Activated CD4-positive, alpha-beta T cell treated with anti-CD3 and anti-CD28 coated beads, Interleukin-2, amount 10 ng/mL, durations not matched to agents 24 days and 14 days (primary cell): ENCODE measurements at regions of chr5 and their contacts with region 1.

Region 1: GRCh38 chr5:36875790-36876388 is 680 bp upstream of the NIPBL start:
- DNase-seq: peak; percentile 93
- H3K4me3 Mint-ChIP-seq: peak overlapping the region; percentile 88
- H3K27ac Mint-ChIP-seq: peak overlapping the region; percentile 91
- H3K4me1 Mint-ChIP-seq: peaks cover 28% of the 10 kb centered on the region
- H3K27me3 Mint-ChIP-seq: no peaks in the 10 kb centered on the region

Region 2: GRCh38 chr5:35617435-35618303 is 1258.2 kb before region 1 on chr5 and contains the start of gene SPEF2:
- intact Hi-C with region 1: loop called (anchors 10 kb)
- DNase-seq: peak; percentile 93
- H3K4me3 Mint-ChIP-seq: peak within 1 kb of the TSS; percentile 87
- H3K27ac Mint-ChIP-seq: peak within 1 kb of the TSS; percentile 89
- H3K4me1 Mint-ChIP-seq: peaks cover 23% of the 10 kb centered on the region
- H3K27me3 Mint-ChIP-seq: no peaks in the 10 kb centered on the region
- total RNA-seq, gene SPEF2: 5.5 and 5.8 TPM in 2 replicates

Region 3: DNA sequence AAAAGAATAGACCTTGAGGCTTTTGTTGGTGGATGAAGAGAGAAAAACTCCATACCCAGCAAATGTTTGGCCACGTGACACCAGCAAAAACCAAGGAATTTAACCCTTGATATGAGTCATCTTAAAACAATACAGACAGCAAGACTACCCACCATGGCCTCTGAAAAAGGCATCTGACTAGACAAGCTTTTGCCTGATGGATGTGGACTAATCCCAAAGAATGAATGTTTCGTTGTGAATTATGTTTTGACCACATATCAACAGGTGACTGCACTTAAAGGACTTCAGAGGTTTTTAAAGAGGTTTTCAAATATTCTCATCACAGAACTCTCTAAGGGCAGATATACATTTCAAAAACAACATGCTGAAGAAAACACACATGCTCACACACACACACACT is 302.4 kb before region 1 on chr5:
- intact Hi-C with region 1: no loop called
- DNase-seq: no peak
- H3K4me3 Mint-ChIP-seq: no peak overlapping the region
- H3K27ac Mint-ChIP-seq: no peak overlapping the region
- H3K4me1 Mint-ChIP-seq: no peaks in the 10 kb centered on the region
- H3K27me3 Mint-ChIP-seq: peaks cover 2% of the 10 kb centered on the region

Region 4: GRCh38 chr5:36739751-36740221 is 136.1 kb before region 1 on chr5:
- intact Hi-C with region 1: loop called (anchors 1 kb)
- DNase-seq: peak; percentile 91
- H3K4me3 Mint-ChIP-seq: no peak overlapping the region
- H3K27ac Mint-ChIP-seq: no peak overlapping the region
- H3K4me1 Mint-ChIP-seq: peaks cover 11% of the 10 kb centered on the region
- H3K27me3 Mint-ChIP-seq: peaks cover 29% of the 10 kb centered on the region

Region 5: GRCh38 chr5:36928947-36929346 is 53.1 kb after region 1 on chr5:
- intact Hi-C with region 1: loop called (anchors 5 kb)
- DNase-seq: no peak
- H3K4me3 Mint-ChIP-seq: no peak overlapping the region
- H3K27ac Mint-ChIP-seq: no peak overlapping the region
- H3K4me1 Mint-ChIP-seq: peaks cover 11% of the 10 kb centered on the region
- H3K27me3 Mint-ChIP-seq: no peaks in the 10 kb centered on the region

Region 6: DNA sequence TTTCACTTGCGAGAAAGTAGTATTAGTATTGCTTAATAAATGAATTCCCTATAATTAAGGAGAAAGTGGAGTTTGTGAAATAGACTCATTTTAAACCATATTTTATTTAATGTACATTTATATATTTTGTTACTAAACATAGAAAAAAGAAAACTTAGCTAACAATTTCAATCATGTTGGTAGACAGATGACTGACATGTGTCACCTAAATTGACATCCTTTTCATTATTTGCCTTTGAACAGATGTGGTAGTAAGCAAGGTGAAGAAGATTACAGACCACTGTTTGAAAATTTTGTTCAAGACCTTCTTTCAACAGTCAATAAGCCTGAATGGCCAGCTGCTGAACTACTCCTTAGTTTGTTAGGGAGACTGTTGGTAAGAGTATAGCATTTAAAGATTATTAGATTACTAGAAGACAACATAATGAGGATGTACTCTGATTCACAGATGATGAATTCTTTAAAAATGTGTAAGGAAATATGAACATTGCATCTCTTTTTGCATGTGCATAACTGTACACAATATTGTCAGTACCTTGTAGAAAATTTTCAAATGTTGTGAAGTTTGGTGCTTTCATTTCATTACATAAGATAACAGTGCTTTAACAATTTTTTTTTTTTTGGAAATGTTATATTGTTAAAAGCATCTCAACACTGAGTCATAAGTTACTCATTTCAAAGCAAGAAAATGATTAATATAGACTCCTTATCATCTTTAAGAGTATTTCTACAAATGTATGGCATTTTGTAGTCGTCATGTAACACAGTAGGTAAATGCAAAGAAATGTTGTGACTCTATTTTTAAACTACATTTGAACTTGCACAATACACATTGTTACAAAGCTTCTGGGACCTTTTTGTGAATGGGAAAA is 140.1 kb after region 1 on chr5:
- intact Hi-C with region 1: no loop called
- DNase-seq: no peak
- H3K4me3 Mint-ChIP-seq: no peak overlapping the region
- H3K27ac Mint-ChIP-seq: no peak overlapping the region
- H3K4me1 Mint-ChIP-seq: no peaks in the 10 kb centered on the region
- H3K27me3 Mint-ChIP-seq: no peaks in the 10 kb centered on the region

Region 7: GRCh38 chr5:37111426-37112382 is 235.8 kb after region 1 on chr5:
- intact Hi-C with region 1: loop called (anchors 5 kb)
- DNase-seq: peak; percentile 87
- H3K4me3 Mint-ChIP-seq: peak overlapping the region; percentile 52
- H3K27ac Mint-ChIP-seq: peak overlapping the region; percentile 78
- H3K4me1 Mint-ChIP-seq: peaks cover 34% of the 10 kb centered on the region
- H3K27me3 Mint-ChIP-seq: no peaks in the 10 kb centered on the region

Region 8: DNA sequence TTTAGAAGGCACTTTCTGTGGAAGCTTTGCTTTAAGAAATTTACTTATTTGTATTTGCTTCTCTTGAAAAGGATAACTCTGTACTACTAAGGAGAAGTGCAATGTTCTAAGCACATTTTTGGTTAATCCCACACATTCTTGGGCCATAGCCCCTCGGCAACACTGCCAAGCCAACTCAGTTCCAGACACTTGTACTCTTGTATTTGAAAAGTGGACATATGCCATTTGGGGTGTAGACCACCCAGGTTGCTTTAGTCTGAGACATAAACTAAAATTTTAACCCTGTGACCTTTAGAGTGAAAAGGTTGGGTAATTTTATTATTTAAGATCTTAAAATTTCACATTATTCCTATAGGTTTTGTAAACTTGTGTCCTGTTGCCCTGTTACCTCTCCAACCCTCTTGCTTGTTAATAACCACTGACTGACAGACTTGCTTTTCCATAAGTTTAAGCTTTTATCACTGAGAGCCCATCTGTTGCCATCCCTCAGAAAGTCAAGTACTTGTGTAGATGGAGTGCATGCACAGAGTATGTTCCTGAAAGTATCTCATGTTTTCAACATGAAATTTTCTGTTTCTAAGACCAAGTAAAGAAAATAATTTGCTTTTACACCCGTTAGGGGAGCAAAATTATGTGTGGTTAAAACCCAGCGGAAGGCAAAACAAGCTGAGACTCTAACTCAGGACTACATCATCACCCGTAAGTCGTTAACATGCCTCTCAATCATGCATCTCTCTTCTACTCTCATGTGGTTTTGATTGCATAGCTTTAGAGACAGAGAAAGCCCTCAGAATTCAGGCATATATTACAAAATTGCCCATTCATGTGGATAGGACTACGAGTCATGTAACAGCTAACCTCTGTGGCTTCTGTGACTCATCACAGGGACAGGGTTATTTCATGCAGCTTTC is 846.6 kb after region 1 on chr5:
- intact Hi-C with region 1: loop called (anchors 5 kb)
- DNase-seq: peak; percentile 83
- H3K4me3 Mint-ChIP-seq: peak overlapping the region; percentile 81
- H3K27ac Mint-ChIP-seq: peak overlapping the region; percentile 95
- H3K4me1 Mint-ChIP-seq: peaks cover 29% of the 10 kb centered on the region
- H3K27me3 Mint-ChIP-seq: no peaks in the 10 kb centered on the region